ENCODE measurements at regions of chr15 and their contacts with region 1.

Region 1: GRCh38 chr15:83653639-83654378 is at the start of gene ADAMTSL3:
- DNase-seq: peak; percentile 88
- total RNA-seq, gene ADAMTSL3: 9.8 TPM

Region 2: DNA sequence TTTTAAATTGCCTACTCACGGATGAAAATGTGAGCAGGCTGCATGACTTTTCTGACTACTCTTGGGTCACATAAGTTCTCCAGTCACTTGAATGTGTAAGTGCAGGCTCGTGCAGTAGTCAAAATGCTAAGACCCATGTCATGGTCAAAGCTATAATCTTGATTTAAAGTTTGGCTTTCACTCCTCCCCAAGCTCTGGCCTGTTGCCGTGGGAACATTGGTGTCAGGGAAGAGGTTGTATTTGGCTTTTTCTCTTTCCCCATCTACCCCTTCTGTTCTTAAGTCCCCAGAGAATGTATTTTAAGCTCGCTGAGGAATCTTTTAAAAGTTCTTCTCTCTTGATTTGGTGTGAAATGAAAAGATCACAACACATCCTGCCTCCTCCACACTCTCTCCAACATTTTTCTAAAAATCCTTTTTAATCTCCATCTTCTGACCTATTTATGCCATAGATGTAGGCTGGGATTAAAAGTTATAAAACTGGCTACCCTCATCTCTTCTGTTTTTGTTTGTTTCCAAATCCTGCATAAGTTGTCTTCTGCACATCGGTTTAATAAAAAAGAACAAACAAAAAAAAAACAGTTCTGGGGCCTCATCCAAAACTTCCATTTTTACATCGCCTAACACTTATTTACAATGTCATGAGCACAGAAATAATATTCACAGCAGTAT is 61.3 kb before region 1 on chr15:
- intact Hi-C with region 1: no loop called
- DNase-seq: no peak

Region 3: DNA sequence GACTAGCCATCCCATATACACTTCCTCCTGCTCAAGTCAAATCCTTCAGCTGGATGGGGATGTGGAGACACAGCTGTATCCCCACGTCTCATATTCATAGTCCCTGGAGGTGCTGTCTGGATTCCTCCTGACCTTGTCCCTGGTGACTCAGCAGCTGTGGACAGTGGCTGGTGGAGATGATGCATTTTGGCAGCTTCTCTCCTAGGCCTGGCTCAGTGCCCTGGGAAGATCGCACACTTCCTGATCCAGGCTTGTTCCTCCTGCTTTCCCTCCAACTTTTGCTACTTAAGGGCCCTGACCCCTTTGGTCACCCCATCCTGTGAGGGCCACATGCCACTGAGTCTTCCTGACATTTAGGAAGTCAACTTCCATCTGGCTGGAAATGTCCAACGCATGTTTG is 44.5 kb after region 1 on chr15:
- intact Hi-C with region 1: loop called (anchors 5 kb)
- DNase-seq: peak; percentile 81

Region 4: DNA sequence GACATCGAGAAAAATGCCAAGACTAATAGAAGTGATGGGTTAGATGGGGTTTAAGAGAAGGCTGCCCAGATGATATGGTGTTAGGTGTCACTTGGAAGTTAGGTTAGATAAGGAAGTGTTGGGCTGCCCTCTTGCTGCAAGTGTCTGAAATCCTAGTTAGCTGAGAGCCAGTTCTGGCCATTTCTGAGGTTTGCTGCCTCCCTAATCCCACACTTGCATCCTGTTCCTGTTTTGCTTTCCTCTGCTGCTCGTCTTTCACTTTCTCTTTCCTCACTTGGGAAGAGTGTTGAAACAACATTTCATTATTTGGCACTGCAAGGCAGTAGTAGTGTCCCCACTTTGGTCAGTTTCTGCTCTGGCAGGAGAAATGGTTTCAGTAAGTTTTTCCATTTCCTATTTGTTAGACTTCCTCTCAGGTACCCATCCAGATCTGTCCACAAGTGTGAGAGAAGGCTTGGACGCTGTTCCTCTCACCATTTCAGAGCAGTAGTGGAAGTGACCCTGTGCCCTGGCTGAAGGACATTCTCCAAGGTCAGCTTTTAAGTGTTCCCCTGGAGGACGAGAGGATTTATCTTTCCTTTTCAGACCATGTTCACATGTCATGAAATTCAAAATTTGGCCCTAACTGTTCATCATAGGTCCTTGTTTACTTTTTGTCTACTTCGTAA is 93.4 kb after region 1 on chr15:
- intact Hi-C with region 1: loop called (anchors 5 kb)
- DNase-seq: no peak

Region 5: GRCh38 chr15:83843471-83843871 is 189.7 kb after region 1 on chr15:
- intact Hi-C with region 1: loop called (anchors 5 kb)
- DNase-seq: no peak

Region 6: GRCh38 chr15:83959477-83959876 is 305.7 kb after region 1 on chr15:
- intact Hi-C with region 1: no loop called
- DNase-seq: no peak

Measured in cardiac septum (tissue), 1 donor.